ENCODE measurements at regions of chr12 and their contacts with region 1.

Region 1: DNA sequence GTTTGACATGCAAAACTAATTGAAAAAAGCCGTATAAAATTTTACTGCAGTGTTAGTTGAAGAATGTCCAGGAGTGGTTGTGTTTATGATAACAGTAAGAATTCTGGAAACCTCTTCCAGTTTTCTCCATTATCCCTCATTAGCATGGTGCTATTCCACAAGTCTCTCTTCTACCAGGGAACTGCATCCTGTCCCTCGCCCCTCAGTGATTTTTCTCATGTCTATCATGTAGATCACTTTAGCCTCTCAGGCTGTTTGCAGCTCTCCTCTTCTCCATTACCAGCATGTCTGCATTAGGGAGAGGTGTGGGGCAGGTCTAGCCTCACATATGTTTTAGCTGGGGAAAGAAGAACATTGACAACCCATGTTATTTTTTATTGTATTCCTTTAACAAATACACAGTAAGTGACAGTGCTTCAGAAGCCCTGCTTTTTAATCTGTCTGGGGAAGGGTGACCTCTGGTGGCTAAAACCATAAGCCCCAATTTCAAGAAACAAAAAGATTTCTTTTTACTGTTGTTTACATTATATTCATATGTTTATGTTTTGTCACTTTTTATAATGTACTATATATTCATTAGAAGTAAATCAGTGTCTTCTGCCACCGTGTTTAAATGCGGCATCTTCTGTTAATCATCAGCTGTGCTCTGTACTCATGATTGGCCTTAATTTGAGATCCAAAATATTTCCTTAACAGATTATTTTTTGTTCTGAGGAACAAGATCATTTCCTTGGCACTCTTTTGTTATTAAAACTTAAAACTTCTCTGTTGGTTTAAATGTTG is 70.7 kb downstream of the RASSF8 start:
- DNase-seq: no peak
- H3K4me3 ChIP-seq: peak overlapping the region in 11 of 59 donors; percentile 0 to 28 (median 6)
- H3K27ac ChIP-seq: peak overlapping the region in 44 of 59 donors; percentile 0 to 78 (median 54)
- H3K27me3 ChIP-seq: no peaks in the 10 kb centered on the region
- CTCF ChIP-seq: peak; percentile 78 to 97 (median 88)

Region 2: DNA sequence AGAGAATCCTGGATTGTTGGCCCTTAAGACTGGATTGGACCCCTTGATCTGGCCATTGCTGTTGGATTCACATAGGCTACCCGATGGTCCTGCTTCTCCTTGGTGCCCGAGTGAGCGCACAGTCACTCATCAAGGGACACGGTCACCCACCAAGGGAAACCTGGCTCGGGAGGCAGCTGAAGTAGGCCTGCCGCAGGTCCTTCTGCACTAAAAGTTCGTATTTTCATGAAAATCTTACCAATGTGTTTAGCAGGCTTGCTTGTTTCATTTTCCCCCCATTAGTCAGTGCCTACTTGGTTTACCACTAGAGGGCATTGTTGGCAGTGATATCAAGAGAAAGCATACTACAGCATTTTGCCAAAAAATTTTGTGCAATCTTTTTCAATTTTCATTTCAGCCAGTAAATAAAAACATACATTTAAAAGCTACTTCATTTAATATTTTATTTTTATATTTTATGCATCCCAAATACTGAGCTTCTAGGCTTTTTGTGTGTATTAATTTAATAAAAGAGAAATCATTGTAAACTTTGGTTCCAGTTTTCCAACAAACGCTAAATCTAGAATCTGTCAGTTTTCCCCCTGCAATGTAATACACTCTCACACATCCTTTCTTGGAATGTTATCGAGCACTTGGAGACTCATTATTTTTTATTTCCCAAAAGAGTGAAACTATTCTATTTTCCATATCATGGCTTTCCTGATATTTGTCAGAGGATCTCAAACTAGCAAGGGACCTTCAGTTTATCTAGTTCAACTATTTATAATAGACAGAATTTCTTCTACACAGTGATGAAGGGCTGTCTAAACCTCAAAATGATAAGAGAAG is 592.7 kb before region 1 on chr12:
- intact Hi-C with region 1: loop called (anchors 2 to 5 kb)
- DNase-seq: peak in 4 of 10 donors; percentile 3 to 53 (median 32)
- H3K4me3 ChIP-seq: peak overlapping the region in 58 of 59 donors; percentile 15 to 68 (median 51)
- H3K27ac ChIP-seq: peak overlapping the region in 22 of 59 donors; percentile 11 to 79 (median 40)
- H3K27me3 ChIP-seq: no peaks in the 10 kb centered on the region
- CTCF ChIP-seq: peak; percentile 74 to 94 (median 86)

Region 3: DNA sequence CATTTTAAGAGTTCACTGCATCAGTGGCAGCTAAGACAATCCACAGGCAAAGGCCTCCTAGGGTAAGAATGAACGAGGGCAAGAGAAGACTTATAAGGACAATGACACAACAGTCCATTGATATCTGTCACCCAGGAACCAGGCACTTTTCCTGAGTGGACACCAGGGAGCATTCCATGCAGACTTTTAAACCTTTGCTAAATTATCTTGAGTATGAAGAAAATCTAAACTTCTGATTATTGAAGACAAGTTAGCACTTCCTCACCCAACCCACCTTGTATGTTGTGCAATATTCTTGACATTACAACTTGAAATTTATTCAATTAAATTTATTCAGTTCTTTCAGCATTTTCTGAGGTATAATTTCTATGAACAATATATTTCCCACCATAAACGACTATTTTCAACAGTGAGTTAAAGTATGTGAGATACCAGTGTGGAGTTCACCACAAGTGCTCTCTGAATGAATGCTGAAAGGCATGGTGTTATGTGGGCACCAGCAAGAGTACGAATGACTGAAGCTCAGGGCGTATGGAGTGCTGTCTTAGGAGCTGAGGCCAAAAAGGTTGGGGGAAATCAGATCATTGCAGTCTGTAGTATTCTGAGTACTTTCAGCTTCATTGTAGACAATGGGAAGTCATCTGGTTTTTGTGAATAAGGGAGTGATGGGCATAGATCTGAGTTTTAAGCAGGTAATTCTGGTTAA is 351.8 kb before region 1 on chr12:
- intact Hi-C with region 1: loop called (anchors 10 kb)
- DNase-seq: no peak
- H3K4me3 ChIP-seq: no peak overlapping the region
- H3K27ac ChIP-seq: no peak overlapping the region
- H3K27me3 ChIP-seq: peaks cover 0 to 7% (median 0%) of the 10 kb centered on the region in 45 donors
- CTCF ChIP-seq: peak in 36 of 56 donors; percentile 9 to 58 (median 31)

Region 4: DNA sequence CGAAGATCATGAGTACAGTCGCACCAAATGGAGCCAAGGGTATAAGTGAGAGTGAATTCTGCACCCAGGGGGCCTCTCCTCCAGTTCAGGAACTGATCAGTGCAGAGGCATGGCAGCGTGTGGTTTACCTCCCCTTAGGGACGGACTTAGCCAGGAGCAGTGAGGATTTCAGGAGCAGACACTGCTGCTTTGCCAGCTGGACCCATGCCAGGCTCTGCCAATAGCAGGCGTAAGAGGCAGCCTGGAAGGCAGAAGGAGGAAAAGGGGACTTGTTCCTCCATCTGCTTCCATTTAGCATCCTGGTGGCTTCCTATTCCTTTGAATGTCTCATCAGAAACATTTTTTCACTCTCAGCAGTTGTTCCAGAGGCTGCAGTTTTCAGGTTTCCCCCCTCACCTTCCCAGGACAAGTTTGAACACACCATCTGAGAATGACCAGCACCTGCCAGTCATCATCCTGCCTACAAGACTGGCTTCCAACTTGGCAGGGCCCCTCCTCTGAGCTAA is 339.1 kb before region 1 on chr12:
- intact Hi-C with region 1: loop called in 1 of 2 experiments (anchors 10 kb)
- DNase-seq: no peak
- H3K4me3 ChIP-seq: no peak overlapping the region
- H3K27ac ChIP-seq: no peak overlapping the region
- H3K27me3 ChIP-seq: no peaks in the 10 kb centered on the region
- CTCF ChIP-seq: no peak

Region 5: DNA sequence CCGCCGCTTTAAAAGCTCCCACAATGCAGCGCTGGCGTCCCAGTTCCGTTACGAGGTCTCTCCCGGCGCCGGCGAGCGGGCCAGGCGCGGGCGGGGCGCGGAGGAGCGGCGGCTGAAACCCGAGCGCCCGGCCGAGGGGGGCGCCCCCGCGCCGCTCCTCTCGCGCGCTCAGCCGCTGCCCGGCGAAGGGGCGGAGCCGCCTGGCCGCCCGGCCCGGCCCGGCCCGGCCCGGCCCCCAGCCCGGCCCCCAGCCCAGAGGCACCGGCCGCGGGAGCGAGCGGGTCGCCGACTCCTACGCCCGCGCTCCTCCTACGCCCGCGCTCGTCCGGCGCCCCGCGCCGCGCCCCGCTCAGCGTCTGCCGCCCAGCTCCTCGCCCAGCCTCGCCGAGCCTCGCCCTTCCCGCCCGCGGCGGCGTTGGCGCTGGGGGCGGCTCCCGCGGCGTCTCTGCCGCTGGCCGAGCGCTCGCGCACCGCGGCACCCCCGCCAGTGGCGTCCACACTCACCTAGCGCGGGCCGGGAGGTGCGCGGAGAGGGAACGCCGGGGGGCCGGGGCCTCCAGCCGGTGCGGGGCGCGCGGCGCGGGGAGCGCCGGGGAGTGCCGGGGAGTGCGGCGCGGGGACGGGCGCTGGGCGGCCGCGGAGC is 70.6 kb before region 1 on chr12 and contains the start of gene RASSF8:
- intact Hi-C with region 1: loop called (anchors 2 to 5 kb)
- DNase-seq: peak in 8 of 10 donors; percentile 33 to 85 (median 52)
- H3K4me3 ChIP-seq: peak within 1 kb of the TSS; percentile 69 to 93 (median 81)
- H3K27ac ChIP-seq: peak within 1 kb of the TSS; percentile 79 to 98 (median 96)
- H3K27me3 ChIP-seq: no peaks in the 10 kb centered on the region
- CTCF ChIP-seq: peak in 13 of 56 donors; percentile 1 to 53 (median 32)
- total RNA-seq, gene RASSF8: 29.7 to 147 (median 57.1) TPM

Measured in dorsolateral prefrontal cortex (tissue), 120 donors.